ENCODE measurements at regions of chr1 and their contacts with region 1.

Region 1: DNA sequence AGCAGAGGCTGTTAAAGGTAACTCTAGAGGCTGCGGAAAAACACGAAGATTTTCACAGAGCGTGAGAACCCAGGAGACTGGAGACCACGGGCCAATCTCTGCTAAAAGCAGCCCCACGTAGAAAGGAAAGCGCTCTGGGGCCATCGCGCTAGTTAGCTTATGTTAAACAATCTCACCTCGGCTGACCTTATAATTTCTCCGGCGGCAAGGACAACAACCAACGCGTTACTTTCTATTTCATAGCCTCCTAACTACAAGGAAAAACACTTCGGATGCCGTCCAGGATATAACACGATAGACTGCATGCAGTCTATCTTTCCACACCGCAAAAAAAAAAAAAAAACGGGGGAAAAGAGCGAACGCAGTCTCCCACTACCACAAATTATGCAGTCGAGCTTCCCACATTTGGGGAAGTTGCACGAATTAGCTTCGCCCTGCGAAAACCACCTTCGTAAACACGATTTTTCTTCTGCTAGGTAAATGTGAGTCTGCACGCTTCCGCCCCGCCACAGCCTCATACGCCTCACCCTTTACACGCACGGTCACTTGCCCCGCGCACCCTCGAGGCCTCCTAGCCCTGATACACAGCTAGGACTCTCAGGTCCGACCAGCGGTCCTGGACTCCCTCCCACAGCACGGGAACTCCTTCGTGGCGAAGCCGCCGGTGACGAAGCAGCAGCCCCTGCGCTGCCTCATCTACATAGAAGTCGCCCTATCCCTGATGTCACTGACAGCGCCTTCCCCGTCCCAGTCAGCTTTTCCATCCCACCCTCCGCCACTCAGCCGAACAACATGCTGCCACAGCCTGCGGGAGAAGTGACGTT is 87.8 kb downstream of the PRKAB2 start:
- DNase-seq: peak; percentile 82
- ATAC-seq: peak; percentile 89
- H3K4me3 ChIP-seq: peak overlapping the region; percentile 75
- H3K27ac ChIP-seq: peak overlapping the region; percentile 55
- H3K4me1 ChIP-seq: peaks cover 2% of the 10 kb centered on the region; the same call in 1 of the 2 replicates
- H3K27me3 ChIP-seq: peaks cover 6 to 14% of the 10 kb centered on the region in 2 experiments
- CTCF ChIP-seq: no peak
- EP300 ChIP-seq: no peak
- POLR2A ChIP-seq: peak; percentile 92
- RAD21 ChIP-seq: no peak

Region 2: DNA sequence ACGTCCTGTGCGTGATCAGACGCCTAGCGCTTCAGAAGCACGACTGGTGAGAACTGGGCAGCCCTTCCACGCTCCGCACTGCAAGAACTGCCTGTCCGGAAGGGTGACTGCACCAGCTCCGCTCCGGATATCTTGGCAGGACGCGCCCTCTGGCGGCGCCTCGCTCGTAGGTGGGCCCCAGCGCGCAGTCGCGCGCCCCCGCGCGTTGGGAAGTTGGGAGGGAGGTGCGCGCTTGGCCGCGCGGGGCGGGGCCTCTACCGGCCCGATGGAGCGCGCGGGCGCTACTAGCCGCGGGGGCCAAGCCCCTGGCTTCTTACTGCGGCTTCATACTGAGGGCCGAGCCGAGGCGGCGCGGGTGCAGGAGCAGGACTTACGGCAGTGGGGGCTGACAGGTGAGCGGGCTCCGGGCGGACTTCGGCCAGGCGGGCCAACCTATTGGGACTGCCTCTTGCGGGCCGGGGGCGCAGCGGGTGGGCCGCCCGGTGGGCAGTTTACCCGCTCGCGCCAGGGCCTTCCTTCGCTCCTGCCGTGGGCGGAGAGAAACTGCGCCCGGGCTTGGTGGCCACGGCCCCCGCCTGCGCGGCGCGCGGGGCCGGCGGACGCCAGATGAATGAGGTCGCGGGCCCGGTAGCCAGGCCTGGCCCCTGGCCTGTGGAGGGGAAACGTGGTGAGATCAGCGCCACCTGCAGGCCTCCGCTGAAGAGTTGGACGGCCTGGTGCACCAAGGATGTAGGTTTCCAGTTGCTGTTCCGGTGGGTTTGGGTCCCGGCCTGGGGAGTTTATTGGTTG is 158.1 kb after region 1 on chr1 and contains the start of gene CHD1L:
- CTCF ChIA-PET with region 1: no interaction called
- POLR2A ChIA-PET with region 1: interaction called, 3 read pairs
- RAD21 ChIA-PET with region 1: no interaction called
- SMC1A ChIA-PET with region 1: interaction called, 3 read pairs
- in situ Hi-C with region 1: no loop called
- intact Hi-C with region 1: loop called (anchors 2 kb)
- DNase-seq: peak; percentile 73
- ATAC-seq: peak; percentile 93
- H3K4me3 ChIP-seq: peak within 1 kb of the TSS; percentile 76
- H3K27ac ChIP-seq: peak within 1 kb of the TSS; percentile 70
- H3K4me1 ChIP-seq: peaks cover 16% of the 10 kb centered on the region
- H3K27me3 ChIP-seq: no peaks in the 10 kb centered on the region; a peak in 1 of 4 replicates
- CTCF ChIP-seq: peak; percentile 89 to 99 (median 93)
- EP300 ChIP-seq: 0 out of 4 replicates have a peak, but pooled peaks of 1 of the 2 experiments have one; percentile 32
- POLR2A ChIP-seq: peak; percentile 88
- RAD21 ChIP-seq: peak; percentile 89
- polyA plus RNA-seq, gene CHD1L: 21.2 to 33.0 TPM

Measured in GM12878 (cell line).